GM12878 (cell line): ENCODE measurements at regions of chr1 and their contacts with region 1.

Region 1: DNA sequence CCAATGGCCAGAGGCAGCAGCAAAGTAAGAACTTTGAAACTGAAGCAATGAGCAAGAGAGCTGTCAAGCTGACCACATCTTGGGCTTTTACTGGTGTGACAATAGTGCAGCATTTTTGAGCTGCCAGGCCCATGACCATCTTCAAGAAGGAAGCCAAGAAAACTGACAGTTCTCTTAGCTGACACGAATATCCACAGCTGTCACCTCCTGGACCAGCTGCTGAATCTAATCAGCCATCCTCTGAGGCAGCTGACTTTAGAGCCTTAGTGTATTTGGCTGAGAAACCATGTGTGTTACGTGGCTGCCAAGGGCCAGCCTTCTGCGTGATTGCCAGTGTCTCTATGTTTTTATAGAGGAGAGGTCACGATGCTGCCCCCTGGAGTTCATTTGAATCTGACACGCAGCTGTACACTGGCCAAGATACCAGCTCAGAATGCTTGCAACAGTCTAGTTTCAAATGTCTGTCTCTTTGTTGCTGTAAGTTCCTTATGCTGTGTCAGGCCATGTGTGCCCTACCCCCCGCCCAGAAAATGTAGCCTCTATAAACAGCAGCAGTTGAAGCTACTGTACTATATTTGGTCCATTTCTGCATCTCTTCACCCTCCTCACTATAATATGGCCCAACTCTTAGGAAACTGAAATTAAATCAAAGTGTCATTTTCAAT is 39.7 kb downstream of the PALMD start:
- DNase-seq: peak; percentile 13
- ATAC-seq: peak; percentile 98
- H3K4me3 ChIP-seq: no peak overlapping the region
- H3K27ac ChIP-seq: no peak overlapping the region
- H3K4me1 ChIP-seq: no peaks in the 10 kb centered on the region
- H3K27me3 ChIP-seq: no peaks in the 10 kb centered on the region
- CTCF ChIP-seq: peak; percentile 64 to 75 (median 66)
- EP300 ChIP-seq: no peak
- POLR2A ChIP-seq: no peak
- RAD21 ChIP-seq: peak; percentile 52

Region 2: GRCh38 chr1:99180343-99180808 is 505.3 kb before region 1 on chr1:
- CTCF ChIA-PET with region 1: interaction called, 9 read pairs
- POLR2A ChIA-PET with region 1: no interaction called
- RAD21 ChIA-PET with region 1: interaction called, 4 read pairs
- SMC1A ChIA-PET with region 1: interaction called, 6 read pairs
- in situ Hi-C with region 1: no loop called
- intact Hi-C with region 1: loop called (anchors 1 kb)
- DNase-seq: peak; percentile 25
- ATAC-seq: peak; percentile 98
- H3K4me3 ChIP-seq: no peak overlapping the region
- H3K27ac ChIP-seq: no peak overlapping the region
- H3K4me1 ChIP-seq: no peaks in the 10 kb centered on the region
- H3K27me3 ChIP-seq: no peaks in the 10 kb centered on the region
- CTCF ChIP-seq: peak; percentile 69 to 87 (median 73)
- EP300 ChIP-seq: no peak
- POLR2A ChIP-seq: no peak
- RAD21 ChIP-seq: peak; percentile 92

Region 3: GRCh38 chr1:99326215-99326949 is 359.3 kb before region 1 on chr1:
- CTCF ChIA-PET with region 1: no interaction called
- POLR2A ChIA-PET with region 1: no interaction called
- RAD21 ChIA-PET with region 1: no interaction called
- SMC1A ChIA-PET with region 1: no interaction called
- in situ Hi-C with region 1: no loop called
- intact Hi-C with region 1: loop called (anchors 10 kb)
- DNase-seq: no peak
- ATAC-seq: 0 out of 3 replicates have a peak, but pooled peaks have one; percentile 22
- H3K4me3 ChIP-seq: no peak overlapping the region
- H3K27ac ChIP-seq: no peak overlapping the region
- H3K4me1 ChIP-seq: no peaks in the 10 kb centered on the region
- H3K27me3 ChIP-seq: no peaks in the 10 kb centered on the region
- CTCF ChIP-seq: peak in 2 of 3 experiments; percentile 25 to 45; a peak in 3 of 6 replicates
- EP300 ChIP-seq: no peak
- POLR2A ChIP-seq: no peak
- RAD21 ChIP-seq: no peak

Region 4: DNA sequence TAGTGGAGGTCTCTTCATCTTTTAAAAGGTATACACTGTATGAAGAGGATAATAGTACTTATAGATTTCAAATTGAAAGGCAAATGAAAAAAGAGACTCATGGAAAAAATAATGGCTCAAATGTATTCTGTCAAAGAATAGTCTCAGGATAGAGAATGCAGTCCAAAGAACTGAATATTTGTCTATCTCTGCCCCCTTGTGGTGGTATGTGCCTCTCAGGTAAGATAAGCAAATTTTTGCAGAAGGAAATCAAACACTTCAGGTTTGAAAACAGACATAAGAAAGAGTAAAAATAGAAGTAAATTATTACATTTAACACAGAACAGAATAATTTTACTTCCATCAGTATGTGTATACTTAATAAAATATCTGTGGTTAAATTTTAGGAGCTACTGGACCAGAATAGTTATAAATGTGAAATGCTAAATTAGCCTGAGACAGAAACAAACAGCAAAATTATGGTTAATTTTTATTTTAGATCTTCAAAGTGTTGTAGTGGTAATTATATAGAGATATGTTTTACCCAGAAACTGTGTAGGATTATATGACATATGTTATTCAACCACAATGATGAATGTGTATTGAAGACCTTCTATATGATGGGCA is 204.2 kb before region 1 on chr1:
- CTCF ChIA-PET with region 1: interaction called, 15 read pairs
- POLR2A ChIA-PET with region 1: no interaction called
- RAD21 ChIA-PET with region 1: interaction called, 3 read pairs
- SMC1A ChIA-PET with region 1: interaction called, 5 read pairs
- in situ Hi-C with region 1: no loop called
- intact Hi-C with region 1: loop called (anchors 5 kb)
- DNase-seq: no peak
- ATAC-seq: peak; percentile 82
- H3K4me3 ChIP-seq: no peak overlapping the region
- H3K27ac ChIP-seq: no peak overlapping the region
- H3K4me1 ChIP-seq: no peaks in the 10 kb centered on the region
- H3K27me3 ChIP-seq: peaks cover 0 to 2% of the 10 kb centered on the region in 2 experiments; a peak in 1 of 4 replicates
- CTCF ChIP-seq: peak; percentile 62 to 71 (median 63)
- EP300 ChIP-seq: no peak
- POLR2A ChIP-seq: no peak
- RAD21 ChIP-seq: peak; percentile 87

Region 5: GRCh38 chr1:99672500-99673213 is 13.0 kb before region 1 on chr1:
- CTCF ChIA-PET with region 1: interaction called, 10 read pairs
- POLR2A ChIA-PET with region 1: no interaction called
- RAD21 ChIA-PET with region 1: interaction called, 3 read pairs
- SMC1A ChIA-PET with region 1: interaction called, 7 read pairs
- in situ Hi-C with region 1: no loop called
- intact Hi-C with region 1: no loop called
- DNase-seq: no peak
- ATAC-seq: no peak
- H3K4me3 ChIP-seq: no peak overlapping the region
- H3K27ac ChIP-seq: no peak overlapping the region
- H3K4me1 ChIP-seq: no peaks in the 10 kb centered on the region
- H3K27me3 ChIP-seq: no peaks in the 10 kb centered on the region
- CTCF ChIP-seq: no peak
- EP300 ChIP-seq: no peak
- POLR2A ChIP-seq: no peak
- RAD21 ChIP-seq: no peak

Region 6: DNA sequence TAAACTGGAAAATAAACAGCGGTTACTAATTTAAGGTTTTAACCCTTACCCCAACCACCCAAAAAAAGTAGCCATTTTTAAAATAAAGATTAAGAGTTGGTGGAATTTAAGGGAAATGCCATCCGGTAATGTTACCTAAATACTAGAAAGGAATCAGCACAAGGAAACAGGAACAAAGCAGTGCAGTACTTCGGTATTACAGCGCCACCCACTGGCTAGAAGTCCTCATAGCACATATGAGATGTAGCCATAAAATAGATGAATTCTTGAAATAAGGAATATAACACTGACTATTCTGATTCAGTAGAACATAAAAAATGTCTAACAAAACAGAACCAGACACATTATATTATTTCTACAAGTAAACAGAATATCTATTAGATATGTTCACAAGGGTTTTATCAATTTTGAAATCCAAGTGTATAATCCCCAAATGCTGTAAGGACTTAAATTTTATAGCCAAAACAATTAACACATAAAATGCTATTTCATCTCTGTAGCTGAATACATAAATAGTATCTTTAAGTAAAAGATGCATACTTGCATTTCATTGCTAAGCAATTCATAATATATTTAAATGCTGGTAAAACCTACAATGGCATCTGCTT is 22.0 kb after region 1 on chr1:
- CTCF ChIA-PET with region 1: interaction called, 13 read pairs
- POLR2A ChIA-PET with region 1: no interaction called
- RAD21 ChIA-PET with region 1: interaction called, 4 read pairs
- SMC1A ChIA-PET with region 1: no interaction called
- in situ Hi-C with region 1: no loop called
- intact Hi-C with region 1: no loop called
- DNase-seq: peak; percentile 11
- ATAC-seq: peak; percentile 86
- H3K4me3 ChIP-seq: no peak overlapping the region
- H3K27ac ChIP-seq: no peak overlapping the region
- H3K4me1 ChIP-seq: no peaks in the 10 kb centered on the region
- H3K27me3 ChIP-seq: no peaks in the 10 kb centered on the region
- CTCF ChIP-seq: peak; percentile 83 to 88 (median 84)
- EP300 ChIP-seq: no peak
- POLR2A ChIP-seq: no peak
- RAD21 ChIP-seq: peak; percentile 81